Tibial artery (tissue), 4 donors: ENCODE measurements at regions of chr17 and their contacts with region 1.

Region 1: GRCh38 chr17:32319548-32319905 is 22.4 kb downstream of the C17orf75 start:
- DNase-seq: peak; percentile 63 to 82
- H3K4me3 ChIP-seq: no peak overlapping the region
- H3K27ac ChIP-seq: no peak overlapping the region
- H3K4me1 ChIP-seq: no peaks in the 10 kb centered on the region
- H3K27me3 ChIP-seq: no peaks in the 10 kb centered on the region
- CTCF ChIP-seq: peak; percentile 89 to 95

Region 2: GRCh38 chr17:32240750-32241149 is 78.8 kb before region 1 on chr17:
- intact Hi-C with region 1: no loop called
- DNase-seq: no peak
- H3K4me3 ChIP-seq: no peak overlapping the region
- H3K27ac ChIP-seq: no peak overlapping the region
- H3K4me1 ChIP-seq: peaks cover 0 to 5% (median 2%) of the 10 kb centered on the region in 4 donors
- H3K27me3 ChIP-seq: no peaks in the 10 kb centered on the region
- CTCF ChIP-seq: no peak

Region 3: DNA sequence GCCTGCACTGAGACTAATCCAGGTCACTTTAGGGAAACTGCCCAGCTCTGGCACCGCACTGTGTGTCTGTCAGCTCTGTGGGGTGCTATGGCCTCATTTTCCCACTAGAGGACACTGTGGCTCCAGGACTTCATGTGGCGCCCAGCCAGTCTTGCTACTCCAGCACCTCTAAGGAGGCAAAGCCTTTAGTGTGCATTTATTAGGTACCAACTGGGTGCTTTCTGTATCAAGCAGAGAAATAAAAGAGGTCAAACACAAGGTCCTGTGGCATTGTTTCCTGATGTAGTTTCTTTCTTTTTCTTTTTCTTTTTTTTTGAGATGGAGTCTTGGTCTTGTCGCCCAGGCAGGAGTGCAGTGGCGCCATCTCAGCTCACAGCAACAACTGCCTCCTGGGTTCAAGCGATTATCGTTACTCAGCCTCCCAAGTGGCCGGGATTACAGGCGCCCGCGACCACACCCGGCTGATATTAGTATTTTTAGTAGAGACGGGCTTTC is 66.4 kb before region 1 on chr17:
- intact Hi-C with region 1: loop called (anchors 5 kb)
- DNase-seq: peak; percentile 82 to 83
- H3K4me3 ChIP-seq: no peak overlapping the region
- H3K27ac ChIP-seq: no peak overlapping the region
- H3K4me1 ChIP-seq: no peaks in the 10 kb centered on the region
- H3K27me3 ChIP-seq: no peaks in the 10 kb centered on the region
- CTCF ChIP-seq: peak; percentile 88 to 93